GM12878 (cell line): ENCODE measurements at regions of chr7 and their contacts with region 1.

Region 1: GRCh38 chr7:85041605-85042216 is 145.1 kb downstream of the SEMA3D start:
- DNase-seq: peak; percentile 3
- ATAC-seq: peak; percentile 87
- H3K4me3 ChIP-seq: no peak overlapping the region
- H3K27ac ChIP-seq: no peak overlapping the region
- H3K4me1 ChIP-seq: no peaks in the 10 kb centered on the region
- H3K27me3 ChIP-seq: no peaks in the 10 kb centered on the region
- CTCF ChIP-seq: peak; percentile 60 to 76 (median 61); a peak in 5 of 6 replicates
- EP300 ChIP-seq: no peak
- POLR2A ChIP-seq: no peak
- RAD21 ChIP-seq: peak; percentile 77

Region 2: DNA sequence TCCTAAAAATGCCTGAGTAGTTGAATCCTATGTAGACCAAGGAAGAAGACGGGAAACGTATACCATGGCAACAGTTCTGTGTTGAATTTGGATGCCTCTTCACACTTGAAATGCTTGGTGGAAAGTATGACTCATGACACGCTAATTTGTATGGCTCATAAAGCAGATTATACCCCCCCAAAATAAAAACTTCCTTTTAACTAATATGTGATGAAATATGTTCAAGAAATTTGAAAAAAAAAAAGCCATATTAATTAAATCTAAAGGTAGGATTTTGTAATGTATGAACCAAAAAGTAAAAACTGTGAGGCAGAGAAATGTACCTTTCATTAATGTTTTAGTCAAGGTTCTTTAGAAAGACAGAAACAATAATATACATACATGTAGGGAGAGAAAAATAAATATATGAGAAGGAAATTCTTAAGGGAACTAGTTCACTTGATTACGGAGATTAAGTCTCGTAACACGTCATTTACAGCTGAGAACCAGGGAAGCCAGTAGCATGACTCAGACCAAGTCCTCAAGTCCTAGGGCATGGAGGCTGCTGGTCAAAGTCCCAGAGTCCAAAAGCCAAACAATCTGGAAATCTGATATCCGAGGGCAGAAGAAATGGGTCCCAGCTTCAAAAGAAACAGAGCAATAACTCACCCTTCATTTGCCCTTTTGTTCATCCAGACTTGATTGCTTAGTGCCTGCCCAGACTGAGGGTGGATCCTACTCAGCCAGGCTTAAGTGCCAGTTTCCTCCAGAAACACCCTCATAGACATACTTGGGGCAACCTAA is 340.0 kb before region 1 on chr7:
- CTCF ChIA-PET with region 1: no interaction called
- POLR2A ChIA-PET with region 1: no interaction called
- RAD21 ChIA-PET with region 1: no interaction called
- SMC1A ChIA-PET with region 1: no interaction called
- in situ Hi-C with region 1: no loop called
- intact Hi-C with region 1: no loop called
- DNase-seq: no peak
- ATAC-seq: peak; percentile 35; the same call in 1 of the 3 replicates
- H3K4me3 ChIP-seq: no peak overlapping the region
- H3K27ac ChIP-seq: no peak overlapping the region
- H3K4me1 ChIP-seq: no peaks in the 10 kb centered on the region
- H3K27me3 ChIP-seq: no peaks in the 10 kb centered on the region
- CTCF ChIP-seq: no peak
- EP300 ChIP-seq: no peak
- POLR2A ChIP-seq: no peak
- RAD21 ChIP-seq: no peak

Region 3: DNA sequence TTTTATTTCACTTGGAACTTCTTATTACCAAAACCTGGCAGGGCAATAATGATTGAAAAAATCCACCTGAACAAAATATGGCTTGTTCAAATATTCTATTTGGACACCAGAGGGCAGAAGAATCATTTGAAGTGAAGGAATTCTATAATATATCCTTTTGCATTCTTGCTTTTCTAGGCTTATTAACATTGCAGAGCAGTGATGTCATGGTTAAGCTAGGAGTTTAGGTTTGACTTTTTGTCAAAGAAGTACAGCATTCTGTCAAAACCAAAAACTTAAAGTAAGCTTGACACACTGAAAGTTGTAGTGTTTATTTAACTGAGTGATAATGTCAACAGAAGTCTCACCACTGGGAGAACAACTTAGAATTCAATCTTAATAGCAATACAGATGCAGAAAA is 10.8 kb before region 1 on chr7:
- CTCF ChIA-PET with region 1: interaction called, 12 read pairs
- POLR2A ChIA-PET with region 1: no interaction called
- RAD21 ChIA-PET with region 1: no interaction called
- SMC1A ChIA-PET with region 1: interaction called, 5 read pairs
- in situ Hi-C with region 1: no loop called
- intact Hi-C with region 1: no loop called
- DNase-seq: no peak
- ATAC-seq: peak; percentile 56
- H3K4me3 ChIP-seq: no peak overlapping the region
- H3K27ac ChIP-seq: no peak overlapping the region
- H3K4me1 ChIP-seq: no peaks in the 10 kb centered on the region
- H3K27me3 ChIP-seq: no peaks in the 10 kb centered on the region
- CTCF ChIP-seq: peak; percentile 22 to 52 (median 42); a peak in 5 of 6 replicates
- EP300 ChIP-seq: no peak
- POLR2A ChIP-seq: no peak
- RAD21 ChIP-seq: peak; percentile 44

Region 4: GRCh38 chr7:85065306-85065705 is 23.6 kb after region 1 on chr7:
- CTCF ChIA-PET with region 1: no interaction called
- POLR2A ChIA-PET with region 1: no interaction called
- RAD21 ChIA-PET with region 1: no interaction called
- SMC1A ChIA-PET with region 1: no interaction called
- in situ Hi-C with region 1: no loop called
- intact Hi-C with region 1: no loop called
- DNase-seq: no peak
- ATAC-seq: no peak
- H3K4me3 ChIP-seq: no peak overlapping the region
- H3K27ac ChIP-seq: no peak overlapping the region
- H3K4me1 ChIP-seq: no peaks in the 10 kb centered on the region
- H3K27me3 ChIP-seq: no peaks in the 10 kb centered on the region
- CTCF ChIP-seq: no peak
- EP300 ChIP-seq: no peak
- POLR2A ChIP-seq: no peak
- RAD21 ChIP-seq: no peak

Region 5: GRCh38 chr7:85464042-85464651 is 422.4 kb after region 1 on chr7:
- CTCF ChIA-PET with region 1: interaction called, 19 read pairs
- POLR2A ChIA-PET with region 1: no interaction called
- RAD21 ChIA-PET with region 1: no interaction called
- SMC1A ChIA-PET with region 1: interaction called, 6 read pairs
- in situ Hi-C with region 1: no loop called
- intact Hi-C with region 1: loop called (anchors 5 kb)
- DNase-seq: no peak
- ATAC-seq: no peak
- H3K4me3 ChIP-seq: no peak overlapping the region
- H3K27ac ChIP-seq: no peak overlapping the region
- H3K4me1 ChIP-seq: no peaks in the 10 kb centered on the region
- H3K27me3 ChIP-seq: no peaks in the 10 kb centered on the region
- CTCF ChIP-seq: no peak; a peak in 1 of 6 replicates
- EP300 ChIP-seq: no peak
- POLR2A ChIP-seq: no peak
- RAD21 ChIP-seq: no peak

Region 6: GRCh38 chr7:85554236-85555178 is 512.8 kb after region 1 on chr7:
- CTCF ChIA-PET with region 1: interaction called, 53 read pairs
- POLR2A ChIA-PET with region 1: no interaction called
- RAD21 ChIA-PET with region 1: interaction called, 10 read pairs
- SMC1A ChIA-PET with region 1: interaction called, 9 read pairs
- in situ Hi-C with region 1: loop called (anchors 10 kb)
- intact Hi-C with region 1: loop called (anchors 2 kb)
- DNase-seq: no peak
- ATAC-seq: peak; percentile 74
- H3K4me3 ChIP-seq: no peak overlapping the region
- H3K27ac ChIP-seq: no peak overlapping the region
- H3K4me1 ChIP-seq: no peaks in the 10 kb centered on the region
- H3K27me3 ChIP-seq: no peaks in the 10 kb centered on the region
- CTCF ChIP-seq: peak; percentile 48 to 66 (median 66); a peak in 5 of 6 replicates
- EP300 ChIP-seq: no peak
- POLR2A ChIP-seq: no peak
- RAD21 ChIP-seq: peak; percentile 69

Region 7: GRCh38 chr7:85829817-85830432 is 788.2 kb after region 1 on chr7:
- CTCF ChIA-PET with region 1: interaction called, 10 read pairs
- POLR2A ChIA-PET with region 1: no interaction called
- RAD21 ChIA-PET with region 1: interaction called, 6 read pairs
- SMC1A ChIA-PET with region 1: interaction called, 3 read pairs
- in situ Hi-C with region 1: no loop called
- intact Hi-C with region 1: no loop called
- DNase-seq: no peak
- ATAC-seq: no peak
- H3K4me3 ChIP-seq: no peak overlapping the region
- H3K27ac ChIP-seq: no peak overlapping the region
- H3K4me1 ChIP-seq: no peaks in the 10 kb centered on the region
- H3K27me3 ChIP-seq: no peaks in the 10 kb centered on the region
- CTCF ChIP-seq: peak in 1 of 3 experiments; percentile 8; a peak in 2 of 6 replicates
- EP300 ChIP-seq: no peak
- POLR2A ChIP-seq: no peak
- RAD21 ChIP-seq: peak; percentile 29; the same call in 1 of the 2 replicates